ENCODE measurements at regions of chr20 and their contacts with region 1.

Region 1: DNA sequence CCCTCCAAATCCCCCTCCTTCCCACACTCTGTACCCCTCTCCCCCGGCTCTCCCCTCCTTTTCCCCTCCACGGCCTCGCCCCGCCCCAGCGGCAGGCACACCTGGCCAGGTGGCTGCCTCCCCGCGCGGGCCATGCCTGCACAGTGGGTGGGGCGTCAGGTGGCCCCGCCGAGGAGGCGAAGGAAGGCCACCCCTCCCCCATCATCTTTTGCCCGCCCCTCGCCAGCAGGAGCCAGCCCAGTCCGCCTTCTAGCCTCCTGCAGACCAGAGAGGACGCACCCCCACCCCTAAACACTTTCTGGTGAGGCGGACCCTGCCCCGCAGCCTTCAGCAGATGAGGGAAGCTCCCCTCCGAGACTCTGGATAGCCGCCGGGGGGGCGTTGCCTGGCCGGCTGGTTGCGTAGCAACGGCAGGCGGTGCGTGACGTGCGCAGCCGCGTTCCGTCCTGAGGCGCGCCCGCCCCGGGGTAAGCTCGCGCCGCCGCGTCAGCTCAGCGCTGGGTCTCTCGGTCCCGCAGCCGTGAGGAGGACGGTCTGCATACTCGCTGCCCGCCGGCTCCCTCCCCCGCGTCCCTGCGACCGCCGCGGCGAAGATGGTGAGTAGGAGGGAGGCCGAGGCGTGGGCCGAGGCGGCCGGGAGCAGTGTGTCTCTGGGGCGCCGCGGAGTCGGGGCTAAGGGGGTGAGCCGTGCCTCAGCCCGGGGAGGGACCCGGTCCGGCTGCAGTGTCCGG is at the start of gene DSTN:
- DNase-seq: peak; percentile 68 to 93 (median 82)
- ATAC-seq: peak; percentile 92 to 93 (median 92)
- H3K4me3 ChIP-seq: peak within 1 kb of the TSS; percentile 80 to 86
- H3K4me3 Mint-ChIP-seq: peak within 1 kb of the TSS; percentile 89 to 96 (median 92)
- H3K27ac ChIP-seq: peak within 1 kb of the TSS; percentile 52
- H3K27ac Mint-ChIP-seq: peak within 1 kb of the TSS; percentile 85 to 88
- H3K4me1 ChIP-seq: peaks cover 11 to 12% of the 10 kb centered on the region in 2 experiments
- H3K4me1 Mint-ChIP-seq: peaks cover 32 to 34% (median 33%) of the 10 kb centered on the region in 3 donors
- H3K27me3 ChIP-seq: peaks cover 0 to 5% of the 10 kb centered on the region in 2 experiments
- H3K27me3 Mint-ChIP-seq: peaks cover 0 to 4% of the 10 kb centered on the region in 2 donors
- total RNA-seq, gene DSTN: 36.3 to 41.7 (median 41.3) TPM

Region 2: GRCh38 chr20:17379651-17380050 is 190.1 kb before region 1 on chr20:
- CTCF ChIA-PET with region 1: no interaction called
- POLR2A ChIA-PET with region 1: interaction called in 1 of 2 experiments, 16 read pairs
- DNase-seq: no peak
- ATAC-seq: no peak
- H3K4me3 ChIP-seq: no peak overlapping the region
- H3K4me3 Mint-ChIP-seq: no peak overlapping the region
- H3K27ac ChIP-seq: no peak overlapping the region
- H3K27ac Mint-ChIP-seq: no peak overlapping the region
- H3K4me1 ChIP-seq: no peaks in the 10 kb centered on the region
- H3K4me1 Mint-ChIP-seq: no peaks in the 10 kb centered on the region
- H3K27me3 ChIP-seq: no peaks in the 10 kb centered on the region
- H3K27me3 Mint-ChIP-seq: peaks cover 6% of the 10 kb centered on the region in 2 donors

Region 3: DNA sequence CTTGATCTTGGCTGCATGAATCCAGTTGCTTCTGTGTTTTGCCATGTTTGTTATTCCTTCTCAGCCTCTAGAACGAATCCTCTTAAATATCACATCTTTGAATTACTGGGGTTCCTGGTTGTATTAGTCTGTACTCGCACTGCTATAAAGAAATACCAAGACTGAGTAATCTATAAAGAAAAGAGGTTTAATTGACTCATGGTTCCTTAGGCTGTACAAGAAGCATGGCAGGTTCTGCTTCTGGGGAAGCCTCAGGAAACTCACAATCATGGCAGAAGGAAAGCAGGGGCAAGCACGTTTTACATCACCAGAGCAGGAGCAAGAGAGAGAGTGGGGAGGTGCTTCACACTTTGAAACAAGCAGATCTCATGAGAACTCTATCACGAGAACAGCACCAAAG is 20.6 kb before region 1 on chr20:
- CTCF ChIA-PET with region 1: no interaction called
- POLR2A ChIA-PET with region 1: no interaction called
- DNase-seq: no peak
- ATAC-seq: no peak
- H3K4me3 ChIP-seq: no peak overlapping the region
- H3K4me3 Mint-ChIP-seq: no peak overlapping the region
- H3K27ac ChIP-seq: no peak overlapping the region
- H3K27ac Mint-ChIP-seq: no peak overlapping the region
- H3K4me1 ChIP-seq: no peaks in the 10 kb centered on the region
- H3K4me1 Mint-ChIP-seq: no peaks in the 10 kb centered on the region
- H3K27me3 ChIP-seq: peaks cover 0 to 5% of the 10 kb centered on the region in 2 experiments
- H3K27me3 Mint-ChIP-seq: peaks cover 3 to 5% of the 10 kb centered on the region in 2 donors

Region 4: GRCh38 chr20:17624551-17625240 is 54.9 kb after region 1 on chr20:
- CTCF ChIA-PET with region 1: no interaction called
- POLR2A ChIA-PET with region 1: no interaction called
- DNase-seq: no peak
- ATAC-seq: no peak
- H3K4me3 ChIP-seq: no peak overlapping the region
- H3K4me3 Mint-ChIP-seq: no peak overlapping the region
- H3K27ac ChIP-seq: no peak overlapping the region
- H3K27ac Mint-ChIP-seq: no peak overlapping the region
- H3K4me1 ChIP-seq: no peaks in the 10 kb centered on the region
- H3K4me1 Mint-ChIP-seq: no peaks in the 10 kb centered on the region
- H3K27me3 ChIP-seq: no peaks in the 10 kb centered on the region
- H3K27me3 Mint-ChIP-seq: no peaks in the 10 kb centered on the region

Region 5: GRCh38 chr20:17682103-17682888 is 112.5 kb after region 1 on chr20 and contains the start of gene RRBP1:
- CTCF ChIA-PET with region 1: interaction called, 4 to 16 read pairs
- POLR2A ChIA-PET with region 1: interaction called in 1 of 2 experiments, 3 read pairs
- DNase-seq: peak; percentile 91 to 97 (median 95)
- ATAC-seq: peak; percentile 92 to 93 (median 93)
- H3K4me3 ChIP-seq: peak within 1 kb of the TSS; percentile 67 to 73
- H3K4me3 Mint-ChIP-seq: peak within 1 kb of the TSS; percentile 83 to 86 (median 85)
- H3K27ac ChIP-seq: peak within 1 kb of the TSS; percentile 54
- H3K27ac Mint-ChIP-seq: peak within 1 kb of the TSS; percentile 75 to 86
- H3K4me1 ChIP-seq: peaks cover 3 to 22% of the 10 kb centered on the region in 2 experiments
- H3K4me1 Mint-ChIP-seq: peaks cover 17 to 26% (median 24%) of the 10 kb centered on the region in 3 donors
- H3K27me3 ChIP-seq: peaks cover 0 to 22% of the 10 kb centered on the region in 2 experiments
- H3K27me3 Mint-ChIP-seq: peaks cover 23 to 35% of the 10 kb centered on the region in 2 donors
- total RNA-seq, gene RRBP1: 26.3 to 32.4 (median 30.1) TPM

Region 6: DNA sequence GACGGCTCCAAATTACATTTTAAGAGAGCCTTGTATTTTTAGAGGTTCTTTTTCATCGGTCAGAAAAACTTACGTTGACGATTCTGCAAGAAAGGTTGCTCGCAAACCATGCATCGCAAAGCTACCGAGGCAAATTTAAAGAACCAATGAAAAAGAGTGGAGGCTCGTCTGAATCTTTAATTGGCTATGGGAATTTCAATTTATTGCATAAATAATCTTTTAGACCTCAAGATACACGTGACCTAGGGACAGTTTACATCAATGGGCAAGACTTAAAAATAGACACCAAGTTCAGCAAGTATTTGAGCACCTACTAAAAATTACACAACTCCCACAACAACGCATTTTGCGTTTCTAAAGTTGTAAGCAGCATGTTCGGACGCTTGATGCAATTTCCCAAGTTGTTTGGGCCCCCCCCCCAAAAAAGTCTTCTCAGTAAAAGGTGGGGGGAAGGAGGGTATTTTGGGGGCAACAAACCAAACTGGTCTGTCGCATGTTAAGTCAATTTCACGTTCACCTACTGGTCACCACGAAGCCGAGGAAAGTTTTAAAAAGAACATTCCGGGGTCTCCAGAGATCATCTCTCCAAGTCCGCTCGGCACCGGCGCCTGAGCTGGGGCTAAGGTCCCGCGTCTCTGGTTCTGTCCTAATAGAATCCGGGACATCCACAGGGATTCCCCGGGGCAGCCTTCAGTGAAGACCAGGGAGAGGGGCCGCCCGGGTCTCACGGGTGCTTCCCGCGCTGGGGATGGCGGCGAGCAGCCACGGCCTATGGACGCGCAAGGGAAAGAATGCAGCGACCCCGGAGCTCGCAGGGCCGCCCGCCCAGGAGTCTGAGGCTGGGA is 398.0 kb after region 1 on chr20:
- CTCF ChIA-PET with region 1: interaction called in 1 of 2 experiments, 11 read pairs
- POLR2A ChIA-PET with region 1: interaction called, 4 to 5 read pairs
- DNase-seq: peak in 4 of 35 experiments; percentile 3 to 42 (median 4)
- ATAC-seq: no peak
- H3K4me3 ChIP-seq: peak overlapping the region; percentile 88 to 98
- H3K4me3 Mint-ChIP-seq: peak overlapping the region; percentile 91 to 96 (median 95)
- H3K27ac ChIP-seq: peak overlapping the region; percentile 98
- H3K27ac Mint-ChIP-seq: peak overlapping the region; percentile 76 to 82
- H3K4me1 ChIP-seq: peaks cover 48 to 61% of the 10 kb centered on the region in 2 experiments
- H3K4me1 Mint-ChIP-seq: peaks cover 77 to 87% (median 79%) of the 10 kb centered on the region in 3 donors
- H3K27me3 ChIP-seq: no peaks in the 10 kb centered on the region
- H3K27me3 Mint-ChIP-seq: no peaks in the 10 kb centered on the region